ENCODE measurements at regions of chr10 and their contacts with region 1.

Region 1: GRCh38 chr10:88064608-88065382 is 201.4 kb downstream of the PTEN start:
- DNase-seq: no peak
- H3K4me3 Mint-ChIP-seq: no peak overlapping the region
- H3K27ac Mint-ChIP-seq: peak overlapping the region; percentile 18
- H3K4me1 Mint-ChIP-seq: peaks cover 39% of the 10 kb centered on the region
- H3K27me3 Mint-ChIP-seq: peaks cover 11% of the 10 kb centered on the region

Region 2: GRCh38 chr10:88091490-88092105 is 26.8 kb after region 1 on chr10:
- intact Hi-C with region 1: loop called (anchors 1 kb)
- DNase-seq: peak; percentile 71
- H3K4me3 Mint-ChIP-seq: no peak overlapping the region
- H3K27ac Mint-ChIP-seq: no peak overlapping the region
- H3K4me1 Mint-ChIP-seq: peaks cover 34% of the 10 kb centered on the region
- H3K27me3 Mint-ChIP-seq: peaks cover 56% of the 10 kb centered on the region

Region 3: GRCh38 chr10:88131511-88132154 is 66.8 kb after region 1 on chr10:
- intact Hi-C with region 1: no loop called
- DNase-seq: no peak
- H3K4me3 Mint-ChIP-seq: no peak overlapping the region
- H3K27ac Mint-ChIP-seq: no peak overlapping the region
- H3K4me1 Mint-ChIP-seq: peaks cover 4% of the 10 kb centered on the region
- H3K27me3 Mint-ChIP-seq: peaks cover 25% of the 10 kb centered on the region

Region 4: DNA sequence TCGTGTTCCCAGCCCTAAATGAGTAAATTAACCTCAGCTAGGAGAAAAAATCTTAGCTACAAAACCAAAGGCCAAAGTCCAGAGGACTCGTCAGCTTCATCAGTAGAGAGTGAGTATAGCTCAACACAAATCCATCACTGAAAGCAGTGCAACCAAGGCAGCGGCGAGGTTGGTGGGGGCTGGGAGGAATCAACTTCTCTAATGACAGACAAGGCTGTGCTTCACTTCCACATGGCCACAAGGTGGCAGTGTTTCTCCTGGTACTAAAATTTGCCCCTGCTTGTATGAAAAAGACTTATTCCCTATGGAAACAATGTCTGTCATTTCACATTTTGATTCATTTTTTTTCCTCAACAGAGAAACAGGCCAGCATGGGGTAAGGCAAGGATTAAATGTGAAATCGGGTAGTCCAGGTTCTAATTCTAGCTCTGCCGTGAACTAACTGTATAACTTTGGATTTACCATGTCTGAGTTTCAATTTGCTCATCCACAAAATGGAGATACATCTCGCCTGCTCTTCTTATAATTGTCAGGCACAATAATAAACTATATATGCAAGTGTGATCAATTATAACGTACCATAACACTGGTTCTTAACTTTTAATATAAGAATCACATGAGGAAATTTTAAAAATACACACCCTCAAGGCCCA is 965.1 kb after region 1 on chr10:
- intact Hi-C with region 1: no loop called
- DNase-seq: peak; percentile 48
- H3K4me3 Mint-ChIP-seq: no peak overlapping the region
- H3K27ac Mint-ChIP-seq: no peak overlapping the region
- H3K4me1 Mint-ChIP-seq: peaks cover 38% of the 10 kb centered on the region
- H3K27me3 Mint-ChIP-seq: no peaks in the 10 kb centered on the region

Measured in activated T-helper 2 cell treated with anti-CD3 and anti-CD28 coated beads, Interferon-gamma antibody, Interleukin-2, Interleukin-4, amounts not matched to agents 10 μg/mL and 5 μg/mL and 100 μg/mL, durations not matched to agents 14 hours and 24 hours and 36 hours (primary cell).